Sigmoid colon (tissue), 7 donors: ENCODE measurements at regions of chr3 and their contacts with region 1.

Region 1: GRCh38 chr3:69080233-69080920 is at the start of gene UBA3:
- DNase-seq: peak; percentile 94
- H3K4me3 ChIP-seq: peak within 1 kb of the TSS; percentile 75 to 95 (median 90)
- H3K27ac ChIP-seq: peak within 1 kb of the TSS; percentile 81 to 92 (median 86)
- H3K4me1 ChIP-seq: peaks cover 0 to 60% (median 51%) of the 10 kb centered on the region in 4 donors
- H3K27me3 ChIP-seq: no peaks in the 10 kb centered on the region
- CTCF ChIP-seq: no peak
- EP300 ChIP-seq: no peak
- POLR2A ChIP-seq: peak in 1 of 2 donors; percentile 18
- total RNA-seq, gene UBA3: 53.6 to 84.9 (median 61.6) TPM

Region 2: DNA sequence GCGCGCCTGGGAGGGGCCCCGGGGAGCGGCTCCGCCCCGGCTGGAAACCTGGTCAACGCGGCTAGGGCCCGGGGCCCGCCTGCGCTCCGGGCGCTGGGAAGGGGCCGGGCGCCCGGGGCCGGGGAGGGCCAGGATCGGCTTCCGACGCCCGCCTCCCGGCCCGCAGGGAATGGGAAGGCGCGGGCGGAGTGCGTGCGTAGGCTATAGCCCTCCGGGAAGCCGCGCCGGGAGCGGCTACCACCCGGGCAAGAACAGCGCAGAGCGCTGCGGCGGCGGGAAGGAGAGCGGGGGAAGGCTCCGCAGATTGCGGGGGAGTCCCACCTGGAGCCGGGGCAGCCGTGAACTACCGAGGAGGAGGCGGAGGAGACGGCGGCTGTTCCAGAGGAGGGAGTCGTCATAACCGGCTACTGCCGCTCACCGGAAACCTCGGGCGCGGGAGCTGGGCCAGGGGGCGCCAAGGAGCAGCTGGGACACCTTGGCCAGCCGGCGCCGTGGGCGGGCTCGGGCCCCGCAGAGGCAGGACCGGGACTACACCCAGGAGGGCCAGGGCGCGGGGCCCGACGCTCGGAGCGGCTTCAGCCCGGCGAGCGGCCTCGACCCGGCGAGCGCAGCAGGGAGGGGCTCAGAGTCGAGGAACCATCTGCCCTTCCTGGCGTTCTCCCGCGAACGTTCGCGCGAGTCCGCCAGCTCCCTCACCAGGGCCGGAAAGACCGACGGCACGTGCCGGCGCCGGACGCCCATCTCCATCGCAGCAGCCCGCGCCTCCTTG is 66.9 kb before region 1 on chr3 and contains the start of gene EOGT:
- intact Hi-C with region 1: loop called (anchors 2 kb)
- DNase-seq: peak; percentile 94
- H3K4me3 ChIP-seq: peak within 1 kb of the TSS; percentile 65 to 96 (median 84)
- H3K27ac ChIP-seq: peak within 1 kb of the TSS; percentile 93 to 99 (median 99)
- H3K4me1 ChIP-seq: peaks cover 0 to 53% (median 48%) of the 10 kb centered on the region in 4 donors
- H3K27me3 ChIP-seq: no peaks in the 10 kb centered on the region
- CTCF ChIP-seq: peak in 3 of 4 experiments; percentile 40 to 60 (median 43)
- EP300 ChIP-seq: peak in 1 of 4 donors; percentile 25
- POLR2A ChIP-seq: peak; percentile 35 to 56
- total RNA-seq, gene EOGT: 42.1 to 103 (median 71.5) TPM

Region 3: GRCh38 chr3:69051756-69052471 is 28.5 kb before region 1 on chr3 and contains the start of gene TMF1:
- intact Hi-C with region 1: loop called (anchors 2 kb)
- DNase-seq: peak; percentile 99
- H3K4me3 ChIP-seq: peak within 1 kb of the TSS; percentile 80 to 82 (median 80)
- H3K27ac ChIP-seq: peak within 1 kb of the TSS; percentile 93 to 97 (median 96)
- H3K4me1 ChIP-seq: peaks cover 0 to 40% (median 30%) of the 10 kb centered on the region in 4 donors
- H3K27me3 ChIP-seq: no peaks in the 10 kb centered on the region
- CTCF ChIP-seq: no peak
- EP300 ChIP-seq: no peak
- POLR2A ChIP-seq: peak; percentile 67 to 79
- total RNA-seq, gene TMF1: 26.9 to 32.8 (median 30.9) TPM